ENCODE measurements at regions of chr10 and their contacts with region 1.

Region 1: DNA sequence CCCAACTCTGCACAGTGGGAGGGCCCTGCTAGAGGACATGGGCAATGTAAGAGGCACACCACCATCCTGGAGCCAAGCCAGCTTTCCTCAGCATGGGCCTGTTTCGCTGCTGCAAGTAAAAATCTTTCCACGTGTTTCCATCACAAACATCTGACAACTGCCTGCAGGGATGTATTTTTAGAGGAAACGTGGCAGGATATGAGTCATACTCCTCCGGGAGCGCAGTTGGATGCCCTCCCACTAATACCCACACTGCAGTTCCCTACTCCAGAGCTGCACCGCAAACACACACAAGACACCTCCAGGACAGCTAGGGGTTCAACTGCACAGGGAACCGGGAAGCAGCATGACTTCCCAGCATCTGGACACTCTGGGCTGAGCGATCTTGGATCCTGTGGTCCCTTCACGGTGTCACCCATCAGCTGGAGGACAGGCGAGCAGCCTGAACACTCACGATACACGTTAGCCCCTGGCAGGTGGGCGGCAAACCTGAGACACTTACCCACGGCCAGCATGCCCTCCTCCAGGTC is 26.1 kb downstream of the PLAC9 start:
- DNase-seq: peak; percentile 82
- ATAC-seq: peak; percentile 86
- H3K4me3 ChIP-seq: peak overlapping the region; percentile 1 to 29; a peak in 2 of 4 replicates
- H3K27ac ChIP-seq: peak overlapping the region; percentile 94
- H3K4me1 ChIP-seq: peaks cover 33 to 65% of the 10 kb centered on the region in 2 experiments
- H3K27me3 ChIP-seq: no peaks in the 10 kb centered on the region
- CTCF ChIP-seq: no peak
- POLR2A ChIP-seq: no peak
- RAD21 ChIP-seq: no peak

Region 2: DNA sequence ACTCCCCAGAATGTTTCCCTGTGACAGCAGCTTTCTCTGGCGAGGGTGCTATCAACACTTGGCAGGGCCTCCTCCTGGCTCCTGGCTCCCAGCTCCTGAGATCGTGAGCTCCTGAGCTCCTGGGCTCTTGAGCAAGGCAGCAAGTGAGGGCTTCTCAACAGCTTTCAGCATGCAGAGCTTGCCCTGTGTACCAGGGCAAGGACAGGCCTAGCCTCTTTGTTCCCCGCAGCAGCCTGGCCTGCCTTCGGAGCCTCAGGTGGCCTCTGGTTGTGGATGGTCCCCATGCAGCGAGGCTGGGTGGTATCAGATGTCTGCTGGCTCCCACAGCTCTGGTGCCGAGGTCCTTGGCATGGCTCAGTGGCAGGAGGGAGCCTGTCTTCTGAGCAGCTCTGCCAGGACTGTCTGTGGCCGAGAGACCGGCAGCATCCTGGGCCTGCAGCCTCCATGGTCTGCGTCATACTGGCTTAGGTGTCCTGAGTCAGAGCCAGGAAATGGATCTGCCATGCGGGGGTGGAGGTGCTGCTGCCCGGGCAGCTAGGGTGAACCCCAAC is 1045.7 kb before region 1 on chr10:
- CTCF ChIA-PET with region 1: no interaction called
- POLR2A ChIA-PET with region 1: no interaction called
- RAD21 ChIA-PET with region 1: no interaction called
- intact Hi-C with region 1: no loop called
- DNase-seq: no peak
- ATAC-seq: no peak
- H3K4me3 ChIP-seq: no peak overlapping the region
- H3K27ac ChIP-seq: no peak overlapping the region
- H3K4me1 ChIP-seq: peaks cover 0 to 28% of the 10 kb centered on the region in 2 experiments; a peak in 2 of 4 replicates
- H3K27me3 ChIP-seq: no peaks in the 10 kb centered on the region
- CTCF ChIP-seq: no peak
- POLR2A ChIP-seq: no peak
- RAD21 ChIP-seq: no peak

Region 3: GRCh38 chr10:79137826-79138225 is 1020.8 kb before region 1 on chr10:
- CTCF ChIA-PET with region 1: no interaction called
- POLR2A ChIA-PET with region 1: no interaction called
- RAD21 ChIA-PET with region 1: no interaction called
- intact Hi-C with region 1: no loop called
- DNase-seq: no peak
- ATAC-seq: no peak
- H3K4me3 ChIP-seq: no peak overlapping the region
- H3K27ac ChIP-seq: no peak overlapping the region
- H3K4me1 ChIP-seq: peaks cover 3 to 8% of the 10 kb centered on the region in 2 experiments; a peak in 2 of 4 replicates
- H3K27me3 ChIP-seq: no peaks in the 10 kb centered on the region
- CTCF ChIP-seq: no peak
- POLR2A ChIP-seq: no peak
- RAD21 ChIP-seq: no peak

Region 4: DNA sequence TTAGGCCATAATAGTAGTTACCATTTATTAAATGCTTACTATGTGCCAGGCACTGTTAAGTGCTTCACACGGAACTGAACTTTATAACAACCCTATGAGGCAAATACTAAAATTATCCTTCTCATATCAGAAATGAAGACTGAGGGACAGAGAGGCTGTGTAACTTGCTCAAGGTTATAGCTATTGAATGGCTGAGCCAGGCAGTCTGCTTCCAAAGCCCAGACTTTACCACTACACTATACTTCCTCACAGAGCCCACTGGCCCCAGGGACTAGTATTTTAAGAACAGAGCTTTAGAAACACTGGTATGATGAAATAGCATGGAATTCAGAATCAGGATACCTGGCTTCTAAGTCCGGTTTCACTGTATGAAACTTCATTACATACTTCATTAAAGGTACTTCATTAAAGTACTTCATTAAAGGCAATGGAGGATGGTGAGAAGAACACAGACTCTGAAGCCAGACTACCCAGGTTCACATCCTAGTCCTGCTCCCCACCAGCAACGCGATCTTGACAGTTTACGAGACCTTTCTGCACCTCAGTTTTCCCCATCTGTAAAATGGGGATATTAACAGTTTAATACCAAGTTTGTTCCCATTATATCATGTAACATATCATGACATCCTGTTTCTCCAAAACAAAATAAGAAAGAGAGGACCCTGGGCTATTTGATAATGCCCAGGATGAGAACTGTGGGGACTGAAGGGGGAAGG is 27.1 kb after region 1 on chr10:
- CTCF ChIA-PET with region 1: no interaction called
- POLR2A ChIA-PET with region 1: no interaction called
- RAD21 ChIA-PET with region 1: no interaction called
- intact Hi-C with region 1: no loop called
- DNase-seq: no peak
- ATAC-seq: no peak
- H3K4me3 ChIP-seq: no peak overlapping the region
- H3K27ac ChIP-seq: no peak overlapping the region
- H3K4me1 ChIP-seq: peaks cover 0 to 38% of the 10 kb centered on the region in 2 experiments; a peak in 2 of 4 replicates
- H3K27me3 ChIP-seq: no peaks in the 10 kb centered on the region
- CTCF ChIP-seq: no peak
- POLR2A ChIP-seq: no peak
- RAD21 ChIP-seq: no peak

Region 5: DNA sequence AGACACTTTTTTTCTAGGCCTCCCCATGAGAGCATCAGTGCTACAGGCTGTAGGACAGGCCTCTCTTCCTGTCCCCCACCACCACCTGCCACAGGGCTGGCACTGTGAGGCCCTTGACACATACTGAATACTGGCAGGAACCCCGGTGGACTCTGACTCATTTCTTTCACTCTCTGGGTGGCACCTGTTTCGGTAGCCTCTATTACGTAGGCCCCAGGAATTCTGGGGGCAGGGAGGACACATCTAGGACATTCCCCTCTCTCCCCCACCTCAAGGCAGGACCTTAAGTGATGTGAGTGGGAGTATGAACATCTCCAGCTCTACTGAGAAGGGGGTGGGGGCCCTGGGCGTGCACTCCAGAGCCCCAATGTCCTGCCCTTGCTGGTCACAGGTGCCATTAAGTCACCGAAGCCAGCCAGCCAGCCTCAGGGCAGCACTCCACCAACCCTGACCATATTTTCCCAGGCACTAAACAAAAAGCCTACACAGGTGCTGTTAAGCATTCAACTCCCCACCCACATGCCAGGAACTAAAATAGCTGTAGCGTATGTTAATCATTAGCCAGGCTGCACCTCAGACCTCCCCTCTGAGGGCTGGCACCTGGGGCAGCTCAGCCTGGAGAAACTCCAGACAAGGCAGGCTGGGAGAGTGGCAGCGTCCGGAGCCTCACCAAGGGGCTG is 37.7 kb after region 1 on chr10:
- CTCF ChIA-PET with region 1: no interaction called
- POLR2A ChIA-PET with region 1: no interaction called
- RAD21 ChIA-PET with region 1: no interaction called
- intact Hi-C with region 1: loop called (anchors 2 kb)
- DNase-seq: peak; percentile 90
- ATAC-seq: peak; percentile 86
- H3K4me3 ChIP-seq: peak overlapping the region; percentile 11 to 43; a peak in 3 of 4 replicates
- H3K27ac ChIP-seq: peak overlapping the region; percentile 83
- H3K4me1 ChIP-seq: peaks cover 67 to 86% of the 10 kb centered on the region in 2 experiments
- H3K27me3 ChIP-seq: no peaks in the 10 kb centered on the region
- CTCF ChIP-seq: no peak
- POLR2A ChIP-seq: no peak
- RAD21 ChIP-seq: no peak

Region 6: DNA sequence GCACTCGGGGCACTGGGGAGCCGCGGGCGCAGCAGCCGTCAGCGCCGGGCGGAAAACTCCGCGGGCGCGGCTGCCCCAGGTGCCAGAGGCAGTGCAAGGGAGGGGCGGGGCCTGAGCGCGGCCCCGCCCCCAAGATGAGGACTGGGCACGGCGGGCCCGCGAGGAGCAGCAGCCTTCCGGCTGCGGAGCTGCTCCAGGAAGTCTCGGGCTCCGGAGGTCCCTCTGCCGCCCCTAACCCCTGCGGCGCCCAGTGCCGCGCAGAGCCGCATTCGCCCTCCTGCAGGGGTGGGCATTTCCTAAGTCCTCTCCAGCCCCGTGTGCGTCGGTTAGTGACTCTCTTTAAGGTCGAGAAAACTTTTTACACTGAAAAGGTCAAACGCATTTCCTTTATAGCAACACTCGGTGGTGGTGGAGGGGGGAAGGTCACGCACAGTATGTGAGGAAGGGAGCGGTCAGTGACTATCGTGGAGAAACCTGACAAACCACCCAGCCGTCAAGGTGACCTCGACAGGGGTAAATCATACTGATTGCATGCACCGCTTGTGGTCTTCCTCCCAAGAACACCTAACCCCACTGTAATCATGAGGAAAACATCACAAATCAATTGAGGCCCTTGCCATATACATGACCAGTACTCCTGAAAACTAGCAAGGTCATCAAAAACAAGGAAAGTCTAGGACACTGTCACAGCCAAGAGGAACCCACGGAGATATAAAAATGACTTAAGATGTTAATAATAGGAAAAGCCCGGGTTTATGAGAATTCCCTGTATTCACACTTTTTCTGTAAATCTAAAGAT is 47.0 kb after region 1 on chr10 and contains the start of gene ANXA11:
- CTCF ChIA-PET with region 1: interaction called, 4 read pairs
- POLR2A ChIA-PET with region 1: interaction called, 3 read pairs
- RAD21 ChIA-PET with region 1: interaction called in 1 of 2 experiments, 5 read pairs
- intact Hi-C with region 1: loop called (anchors 2 kb)
- DNase-seq: peak; percentile 61
- ATAC-seq: peak; percentile 67
- H3K4me3 ChIP-seq: peak within 1 kb of the TSS; percentile 74 to 87
- H3K27ac ChIP-seq: peak within 1 kb of the TSS; percentile 99
- H3K4me1 ChIP-seq: peaks cover 48 to 77% of the 10 kb centered on the region in 2 experiments
- H3K27me3 ChIP-seq: no peaks in the 10 kb centered on the region
- CTCF ChIP-seq: no peak
- POLR2A ChIP-seq: peak; percentile 89
- RAD21 ChIP-seq: no peak
- total RNA-seq, gene ANXA11: 181 TPM